Activated CD4-positive, alpha-beta T cell treated with anti-CD3 and anti-CD28 coated beads for 36 hours (primary cell): ENCODE measurements at regions of chr6 and their contacts with region 1.

Region 1: DNA sequence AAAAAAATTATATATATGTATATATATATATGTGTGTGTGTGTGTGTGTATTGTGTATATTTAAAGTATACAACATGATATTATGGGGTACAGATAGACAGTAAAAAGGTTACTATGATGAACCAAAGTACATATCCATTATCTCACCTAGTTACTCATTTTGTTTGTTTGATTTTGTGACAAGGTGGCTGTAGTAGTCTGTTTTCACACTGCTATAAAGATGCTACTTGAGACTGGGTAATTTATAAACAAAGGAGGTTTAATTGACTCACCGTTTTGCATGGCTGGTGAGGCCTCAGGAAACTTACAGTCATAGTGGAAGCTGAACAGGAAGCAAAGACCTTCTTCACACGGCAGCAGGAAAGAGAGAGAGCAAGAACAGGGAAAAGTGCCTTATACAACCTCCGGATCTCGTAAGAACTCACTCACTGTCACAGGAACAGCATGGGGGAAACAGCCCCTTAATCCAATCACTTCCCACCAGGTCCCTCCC is 30.2 kb upstream of the DACT2 start:
- DNase-seq: no peak
- ATAC-seq: peak; percentile 23
- H3K4me3 Mint-ChIP-seq: no peak overlapping the region
- H3K27ac Mint-ChIP-seq: no peak overlapping the region
- H3K4me1 Mint-ChIP-seq: peaks cover 9% of the 10 kb centered on the region
- H3K27me3 Mint-ChIP-seq: peaks cover 19% of the 10 kb centered on the region

Region 2: GRCh38 chr6:166786704-166787293 is 1563.0 kb before region 1 on chr6:
- CTCF ChIA-PET with region 1: no interaction called
- POLR2A ChIA-PET with region 1: no interaction called
- intact Hi-C with region 1: no loop called
- DNase-seq: no peak
- ATAC-seq: no peak
- H3K4me3 Mint-ChIP-seq: no peak overlapping the region
- H3K27ac Mint-ChIP-seq: no peak overlapping the region
- H3K4me1 Mint-ChIP-seq: no peaks in the 10 kb centered on the region
- H3K27me3 Mint-ChIP-seq: no peaks in the 10 kb centered on the region

Region 3: DNA sequence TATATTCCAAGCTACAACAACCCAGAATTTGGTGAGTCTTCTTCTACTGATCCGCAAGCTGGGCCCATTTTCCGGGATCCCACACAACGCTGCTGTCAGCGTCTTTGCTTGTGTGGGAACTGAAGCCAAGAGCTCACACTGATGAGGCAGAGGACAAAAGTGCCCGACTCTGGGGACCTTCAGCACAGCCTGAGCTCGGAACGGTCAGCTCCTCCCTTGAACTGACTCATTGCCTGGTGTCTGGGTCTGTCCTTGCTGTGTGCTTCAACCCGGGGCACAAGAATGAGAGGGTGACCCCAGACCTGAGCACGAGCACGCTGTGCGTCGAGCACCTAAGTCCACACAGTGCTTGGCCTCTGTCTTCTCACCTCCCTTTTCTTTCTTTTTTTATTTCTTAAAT is 63.6 kb before region 1 on chr6:
- CTCF ChIA-PET with region 1: interaction called, 3 read pairs
- POLR2A ChIA-PET with region 1: no interaction called
- intact Hi-C with region 1: loop called in 1 of 2 experiments (anchors 2 kb)
- DNase-seq: no peak
- ATAC-seq: no peak
- H3K4me3 Mint-ChIP-seq: no peak overlapping the region
- H3K27ac Mint-ChIP-seq: no peak overlapping the region
- H3K4me1 Mint-ChIP-seq: peaks cover 25% of the 10 kb centered on the region
- H3K27me3 Mint-ChIP-seq: peaks cover 32% of the 10 kb centered on the region